ENCODE measurements at regions of chr12 and their contacts with region 1.

Region 1: DNA sequence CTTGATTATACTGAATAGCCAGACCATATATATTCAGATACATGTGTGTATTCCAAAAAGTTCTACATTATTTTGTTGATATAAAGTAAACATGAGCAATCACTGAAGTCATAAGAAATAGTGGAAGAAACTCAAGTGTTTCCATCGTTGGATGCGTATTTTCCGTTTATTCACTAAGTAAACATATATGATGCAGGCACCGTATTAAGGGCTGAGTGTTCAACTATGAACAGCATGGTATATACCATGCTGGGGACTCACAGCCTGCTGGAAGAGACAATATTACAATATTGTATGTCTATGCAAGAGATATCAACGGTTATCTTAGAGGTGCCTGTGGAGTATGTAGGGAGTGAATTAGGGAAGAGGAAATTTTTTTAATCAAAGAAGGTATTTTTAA is 1.2 kb downstream of the PYROXD1 start:
- DNase-seq: no peak
- ATAC-seq: no peak
- H3K4me3 Mint-ChIP-seq: peak overlapping the region; percentile 99
- H3K27ac Mint-ChIP-seq: peak overlapping the region; percentile 97
- H3K4me1 Mint-ChIP-seq: peaks cover 27% of the 10 kb centered on the region
- H3K27me3 Mint-ChIP-seq: peaks cover 2% of the 10 kb centered on the region
- CTCF ChIP-seq: no peak

Region 2: DNA sequence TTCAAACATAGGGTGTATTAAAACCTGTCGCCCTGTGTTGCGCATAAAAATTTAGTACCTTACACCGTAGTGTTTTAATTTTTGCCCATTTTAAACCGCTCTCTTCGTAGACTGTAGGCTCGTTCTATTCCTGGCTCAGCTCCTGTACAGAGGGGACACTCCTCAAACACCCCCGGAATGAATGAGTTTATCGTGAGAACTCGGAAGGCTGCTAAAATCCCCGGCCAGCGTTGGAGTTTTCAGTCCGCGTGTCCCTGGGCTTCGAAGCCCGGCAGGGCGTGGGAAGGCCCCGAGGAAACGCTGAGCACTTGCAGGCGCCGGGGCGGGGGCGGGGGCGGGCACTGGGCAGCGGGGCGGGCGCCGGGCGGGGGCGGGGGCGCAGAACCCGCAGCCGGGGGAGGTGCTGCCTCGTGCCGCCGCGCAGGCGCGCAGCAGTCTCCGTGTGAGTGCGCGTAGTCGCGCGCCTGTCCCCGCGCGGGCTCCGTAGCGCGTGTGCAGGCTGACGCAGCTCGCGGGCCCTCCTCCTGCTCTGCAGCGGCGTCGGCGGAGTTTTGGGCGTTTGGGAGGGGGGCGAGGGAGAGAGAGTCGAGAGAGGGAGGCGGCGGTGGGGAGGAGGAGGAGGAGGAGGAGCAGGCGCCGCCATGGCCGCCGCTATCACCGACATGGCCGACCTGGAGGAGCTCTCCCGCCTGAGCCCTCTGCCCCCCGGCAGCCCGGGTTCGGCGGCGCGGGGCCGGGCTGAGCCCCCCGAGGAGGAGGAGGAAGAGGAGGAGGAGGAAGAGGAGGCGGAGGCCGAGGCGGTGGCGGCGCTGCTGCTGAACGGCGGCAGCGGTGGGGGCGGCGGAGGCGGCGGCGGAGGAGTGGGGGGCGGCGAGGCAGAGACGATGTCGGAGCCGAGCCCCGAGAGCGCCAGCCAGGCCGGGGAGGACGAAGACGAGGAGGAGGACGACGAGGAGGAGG is 1999.3 kb before region 1 on chr12 and contains the start of gene AEBP2:
- CTCF ChIA-PET with region 1: no interaction called
- POLR2A ChIA-PET with region 1: no interaction called
- intact Hi-C with region 1: loop called (anchors 5 kb)
- DNase-seq: peak; percentile 84
- ATAC-seq: peak; percentile 91
- H3K4me3 Mint-ChIP-seq: peak within 1 kb of the TSS; percentile 99
- H3K27ac Mint-ChIP-seq: peak within 1 kb of the TSS; percentile 92
- H3K4me1 Mint-ChIP-seq: peaks cover 37% of the 10 kb centered on the region
- H3K27me3 Mint-ChIP-seq: no peaks in the 10 kb centered on the region
- CTCF ChIP-seq: no peak
- total RNA-seq, gene AEBP2: 44.8 and 51.0 TPM in 2 replicates

Region 3: GRCh38 chr12:20174528-20175175 is 1264.0 kb before region 1 on chr12:
- CTCF ChIA-PET with region 1: no interaction called
- POLR2A ChIA-PET with region 1: no interaction called
- intact Hi-C with region 1: no loop called
- DNase-seq: no peak
- ATAC-seq: no peak
- H3K4me3 Mint-ChIP-seq: no peak overlapping the region
- H3K27ac Mint-ChIP-seq: no peak overlapping the region
- H3K4me1 Mint-ChIP-seq: no peaks in the 10 kb centered on the region
- H3K27me3 Mint-ChIP-seq: no peaks in the 10 kb centered on the region
- CTCF ChIP-seq: no peak

Region 4: DNA sequence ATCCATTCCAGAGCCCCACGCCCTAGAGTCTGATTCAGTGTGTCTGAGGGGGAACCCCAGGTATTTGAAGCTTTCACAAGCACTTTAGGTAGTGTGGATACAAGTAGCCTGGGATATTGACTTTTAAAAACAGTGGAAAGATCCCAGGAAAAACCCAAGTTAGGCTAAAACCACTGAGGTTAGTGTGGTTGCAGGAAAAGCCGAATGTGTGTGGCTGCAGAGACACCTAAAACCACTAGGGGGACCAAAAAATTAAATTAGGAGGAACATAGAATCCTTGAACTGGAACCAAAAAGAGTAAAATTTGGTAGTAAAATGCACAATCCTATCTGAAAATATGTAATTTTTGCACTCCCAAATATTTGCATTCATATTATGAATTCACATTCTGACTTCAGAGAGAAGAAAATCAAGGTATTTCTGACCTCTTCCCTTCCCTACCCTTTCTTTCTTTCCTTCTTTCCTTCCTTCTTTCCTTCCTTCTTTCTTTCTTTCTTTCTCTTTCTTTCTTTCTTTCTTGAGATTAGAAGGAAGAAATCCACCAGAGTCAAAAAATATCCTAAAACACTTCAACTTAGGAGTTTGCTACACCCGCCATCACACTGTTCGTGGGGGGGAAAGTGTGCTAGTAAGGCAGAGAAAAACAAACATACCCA is 141.8 kb before region 1 on chr12:
- CTCF ChIA-PET with region 1: no interaction called
- POLR2A ChIA-PET with region 1: no interaction called
- intact Hi-C with region 1: loop called (anchors 10 kb)
- DNase-seq: no peak
- ATAC-seq: no peak
- H3K4me3 Mint-ChIP-seq: no peak overlapping the region
- H3K27ac Mint-ChIP-seq: no peak overlapping the region
- H3K4me1 Mint-ChIP-seq: peaks cover 1% of the 10 kb centered on the region
- H3K27me3 Mint-ChIP-seq: peaks cover under 1% of the 10 kb centered on the region
- CTCF ChIP-seq: no peak

Region 5: GRCh38 chr12:21657326-21658077 is 218.9 kb after region 1 on chr12 and contains the start of gene LDHB:
- CTCF ChIA-PET with region 1: no interaction called
- POLR2A ChIA-PET with region 1: interaction called, 16 read pairs
- intact Hi-C with region 1: loop called (anchors 1 kb)
- DNase-seq: peak; percentile 72
- ATAC-seq: peak; percentile 97
- H3K4me3 Mint-ChIP-seq: peak within 1 kb of the TSS; percentile 99
- H3K27ac Mint-ChIP-seq: peak within 1 kb of the TSS; percentile 97
- H3K4me1 Mint-ChIP-seq: peaks cover 24% of the 10 kb centered on the region
- H3K27me3 Mint-ChIP-seq: peaks cover 3% of the 10 kb centered on the region
- CTCF ChIP-seq: no peak
- total RNA-seq, gene LDHB: 385 and 440 TPM in 2 replicates

Region 6: GRCh38 chr12:22046090-22046967 is 607.7 kb after region 1 on chr12 and contains the start of gene CMAS:
- CTCF ChIA-PET with region 1: no interaction called
- POLR2A ChIA-PET with region 1: no interaction called
- intact Hi-C with region 1: loop called (anchors 1 kb)
- DNase-seq: peak; percentile 62
- ATAC-seq: peak; percentile 91
- H3K4me3 Mint-ChIP-seq: peak within 1 kb of the TSS; percentile 94
- H3K27ac Mint-ChIP-seq: peak within 1 kb of the TSS; percentile 81
- H3K4me1 Mint-ChIP-seq: peaks cover 15% of the 10 kb centered on the region
- H3K27me3 Mint-ChIP-seq: peaks cover 1% of the 10 kb centered on the region
- CTCF ChIP-seq: no peak
- total RNA-seq, gene CMAS: 15.8 and 16.2 TPM in 2 replicates

Measured in activated B cell treated with CpG ODN at 0.5 μM for 24 hours (primary cell).